WTC11 (cell line): ENCODE measurements at regions of chr1 and their contacts with region 1.

Region 1: DNA sequence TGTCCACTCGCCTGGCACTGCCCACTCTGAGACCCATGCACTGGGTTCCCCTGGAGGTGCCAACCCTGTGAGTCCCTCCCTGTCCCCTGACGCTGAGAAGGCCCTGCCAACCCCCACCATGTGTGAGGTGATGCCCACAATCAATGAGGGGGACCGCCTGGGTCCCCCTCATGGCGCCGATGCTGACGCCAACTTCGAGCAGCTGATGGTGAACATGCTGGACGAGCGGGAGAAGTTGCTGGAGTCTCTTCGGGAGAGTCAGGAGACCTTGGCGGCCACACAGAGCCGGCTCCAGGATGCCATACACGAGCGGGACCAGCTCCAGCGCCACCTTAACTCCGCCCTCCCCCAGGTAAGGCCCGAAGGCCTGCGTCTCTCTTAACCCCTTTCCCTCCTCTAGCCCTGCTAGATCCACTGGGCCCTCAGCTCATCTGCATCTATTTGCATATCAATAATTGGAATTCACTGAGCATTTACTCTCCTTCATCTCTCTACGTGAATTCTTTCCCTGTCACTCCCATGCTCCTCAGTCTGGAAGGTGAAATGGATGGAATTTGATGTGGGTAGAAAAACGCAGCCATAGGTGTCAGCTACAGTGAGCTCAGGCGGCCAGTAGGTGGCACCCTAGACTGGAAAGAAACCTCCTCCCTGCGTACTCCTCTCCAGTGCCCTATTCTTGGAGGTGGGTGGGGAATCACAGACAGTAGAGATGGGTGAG is 12.8 kb downstream of the PPFIA4 start:
- DNase-seq: peak; percentile 80
- ATAC-seq: peak; percentile 84
- H3K4me3 Mint-ChIP-seq: no peak overlapping the region
- H3K27ac Mint-ChIP-seq: no peak overlapping the region
- H3K4me1 Mint-ChIP-seq: peaks cover 26% of the 10 kb centered on the region
- H3K27me3 Mint-ChIP-seq: no peaks in the 10 kb centered on the region; the same call in 1 of the 2 replicates
- CTCF ChIP-seq: peak; percentile 54

Region 2: GRCh38 chr1:203057911-203058675 is 19.0 kb after region 1 on chr1:
- CTCF ChIA-PET with region 1: interaction called, 412 read pairs
- POLR2A ChIA-PET with region 1: interaction called, 3 read pairs
- DNase-seq: no peak
- ATAC-seq: no peak
- H3K4me3 Mint-ChIP-seq: no peak overlapping the region
- H3K27ac Mint-ChIP-seq: no peak overlapping the region
- H3K4me1 Mint-ChIP-seq: peaks cover 34% of the 10 kb centered on the region
- H3K27me3 Mint-ChIP-seq: no peaks in the 10 kb centered on the region
- CTCF ChIP-seq: no peak

Region 3: DNA sequence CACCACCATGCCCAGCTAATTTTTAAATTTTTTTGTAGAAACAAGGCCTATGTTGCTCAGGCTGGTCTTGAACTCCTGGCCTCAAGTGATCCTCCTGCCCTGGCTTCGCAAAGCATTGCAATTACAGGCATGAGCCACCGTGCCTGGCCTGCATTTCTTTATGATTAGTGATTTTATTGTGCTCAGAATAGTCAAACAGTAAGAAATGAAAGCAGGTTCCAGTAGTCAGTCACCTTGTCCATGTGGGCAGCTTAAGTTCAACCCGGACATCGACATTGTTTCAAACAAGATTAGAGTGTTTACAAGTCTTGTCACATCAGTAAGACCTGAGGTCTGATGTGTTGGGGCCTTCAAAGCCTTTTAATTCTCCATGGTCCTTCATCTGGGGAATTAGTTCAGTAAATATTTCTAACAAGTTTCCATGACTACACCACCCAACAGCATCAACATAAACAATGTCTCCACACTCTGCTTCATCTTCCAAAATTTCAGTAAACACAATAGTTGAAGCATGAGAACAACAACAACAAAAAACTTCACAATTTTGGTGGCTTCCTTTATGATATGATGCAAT is 73.3 kb after region 1 on chr1:
- CTCF ChIA-PET with region 1: interaction called, 116 read pairs
- POLR2A ChIA-PET with region 1: interaction called, 5 read pairs
- DNase-seq: no peak
- ATAC-seq: no peak
- H3K4me3 Mint-ChIP-seq: no peak overlapping the region
- H3K27ac Mint-ChIP-seq: no peak overlapping the region
- H3K4me1 Mint-ChIP-seq: no peaks in the 10 kb centered on the region; the same call in 1 of the 2 replicates
- H3K27me3 Mint-ChIP-seq: peaks cover 17% of the 10 kb centered on the region
- CTCF ChIP-seq: no peak

Region 4: DNA sequence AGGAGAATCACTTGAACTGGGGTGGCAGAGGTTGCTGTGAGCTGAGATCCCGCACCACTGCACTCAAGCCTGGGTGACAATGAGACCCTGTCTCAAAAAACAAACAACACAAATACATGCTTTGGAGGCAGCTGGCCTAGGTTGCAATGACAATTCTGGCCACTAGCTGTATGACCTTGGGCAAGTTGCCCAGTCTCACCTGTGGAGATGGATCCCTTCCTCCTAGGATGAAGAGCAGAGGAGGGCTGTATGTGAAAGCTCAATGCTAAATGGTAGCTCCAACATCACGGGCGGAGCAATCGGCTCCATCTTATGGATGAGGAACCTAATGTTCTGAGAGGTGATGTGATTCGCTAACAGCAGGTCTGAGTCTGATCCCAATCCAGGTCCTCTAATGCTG is 109.1 kb after region 1 on chr1:
- CTCF ChIA-PET with region 1: interaction called, 39 read pairs
- POLR2A ChIA-PET with region 1: no interaction called
- DNase-seq: peak; percentile 44
- ATAC-seq: peak; percentile 50
- H3K4me3 Mint-ChIP-seq: no peak overlapping the region
- H3K27ac Mint-ChIP-seq: no peak overlapping the region
- H3K4me1 Mint-ChIP-seq: peaks cover 87% of the 10 kb centered on the region
- H3K27me3 Mint-ChIP-seq: no peaks in the 10 kb centered on the region
- CTCF ChIP-seq: no peak

Region 5: GRCh38 chr1:203186446-203187303 is 147.6 kb after region 1 on chr1 and contains the start of gene CHI3L1:
- CTCF ChIA-PET with region 1: interaction called, 25 read pairs
- POLR2A ChIA-PET with region 1: no interaction called
- DNase-seq: no peak
- ATAC-seq: peak; percentile 65
- H3K4me3 Mint-ChIP-seq: peak within 1 kb of the TSS; percentile 32; the same call in 1 of the 2 replicates
- H3K27ac Mint-ChIP-seq: no peak within 1 kb of the TSS
- H3K4me1 Mint-ChIP-seq: peaks cover 32% of the 10 kb centered on the region
- H3K27me3 Mint-ChIP-seq: peaks cover 2% of the 10 kb centered on the region; the same call in 1 of the 2 replicates
- CTCF ChIP-seq: no peak
- total RNA-seq, gene CHI3L1: 0.24 to 0.41 TPM (median 0.27 TPM) in 3 replicates

Region 6: GRCh38 chr1:203273206-203273868 is 234.3 kb after region 1 on chr1:
- CTCF ChIA-PET with region 1: interaction called, 369 read pairs
- POLR2A ChIA-PET with region 1: interaction called, 3 read pairs
- DNase-seq: peak; percentile 90
- ATAC-seq: peak; percentile 70
- H3K4me3 Mint-ChIP-seq: peak overlapping the region; percentile 59
- H3K27ac Mint-ChIP-seq: no peak overlapping the region
- H3K4me1 Mint-ChIP-seq: peaks cover 13% of the 10 kb centered on the region
- H3K27me3 Mint-ChIP-seq: peaks cover 47% of the 10 kb centered on the region
- CTCF ChIP-seq: peak; percentile 97